Thyroid gland (tissue), 4 donors: ENCODE measurements at regions of chr6 and their contacts with region 1.

Region 1: GRCh38 chr6:134063966-134064445 is 11.6 kb upstream of the SLC2A12 start:
- DNase-seq: peak; percentile 49 to 60
- H3K4me3 ChIP-seq: no peak overlapping the region
- H3K27ac ChIP-seq: no peak overlapping the region
- H3K4me1 ChIP-seq: no peaks in the 10 kb centered on the region
- H3K27me3 ChIP-seq: no peaks in the 10 kb centered on the region
- CTCF ChIP-seq: peak; percentile 35 to 88 (median 70)
- POLR2A ChIP-seq: no peak

Region 2: GRCh38 chr6:133923938-133924593 is 139.9 kb before region 1 on chr6:
- intact Hi-C with region 1: loop called (anchors 10 kb)
- DNase-seq: peak; percentile 68 to 70
- H3K4me3 ChIP-seq: no peak overlapping the region
- H3K27ac ChIP-seq: no peak overlapping the region
- H3K4me1 ChIP-seq: no peaks in the 10 kb centered on the region
- H3K27me3 ChIP-seq: no peaks in the 10 kb centered on the region
- CTCF ChIP-seq: peak; percentile 42 to 93 (median 83)
- POLR2A ChIP-seq: no peak

Region 3: DNA sequence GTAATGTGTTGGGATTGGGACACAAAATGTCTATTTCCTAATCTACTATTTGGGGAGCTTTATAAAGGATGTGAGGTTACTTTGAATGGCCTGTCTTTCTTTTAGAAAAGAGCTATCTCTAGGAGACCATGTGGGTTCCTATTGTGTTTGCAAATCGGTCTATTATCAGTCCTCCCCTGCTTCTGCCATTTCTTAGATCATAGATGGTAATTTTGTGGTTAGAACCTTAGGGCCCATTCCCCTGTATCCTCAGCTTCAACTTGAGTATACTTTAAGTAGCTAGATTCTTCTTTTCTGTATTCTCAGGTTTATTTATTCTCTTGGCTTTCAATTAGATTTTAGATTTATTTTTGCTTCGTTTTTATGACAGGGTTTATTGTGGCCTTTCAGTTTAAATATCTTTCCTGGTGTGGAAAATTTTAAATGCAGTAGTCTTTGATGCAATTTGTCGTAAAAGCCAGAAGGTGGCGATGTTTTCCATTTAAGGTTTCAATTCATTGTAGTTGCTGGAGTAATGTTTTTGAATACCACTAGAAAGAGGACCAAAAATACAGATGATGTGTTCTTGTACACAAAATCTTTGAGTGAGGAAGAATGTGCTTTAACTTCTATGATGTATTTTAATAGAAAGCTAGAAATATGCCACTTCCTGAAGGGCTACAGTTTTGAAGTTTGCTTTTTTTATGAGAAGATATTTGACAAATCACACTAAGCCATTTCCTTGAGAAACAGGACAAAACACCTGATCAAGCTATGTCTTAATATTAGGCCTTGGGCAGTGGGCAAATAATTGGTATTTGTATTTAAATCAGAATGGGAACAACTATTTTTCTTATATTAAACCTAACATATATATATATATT is 90.7 kb before region 1 on chr6:
- intact Hi-C with region 1: loop called (anchors 10 kb)
- DNase-seq: no peak
- H3K4me3 ChIP-seq: no peak overlapping the region
- H3K27ac ChIP-seq: no peak overlapping the region
- H3K4me1 ChIP-seq: peaks cover 6 to 9% of the 10 kb centered on the region in 2 donors
- H3K27me3 ChIP-seq: no peaks in the 10 kb centered on the region
- CTCF ChIP-seq: peak; percentile 33 to 76 (median 55)
- POLR2A ChIP-seq: no peak

Region 4: GRCh38 chr6:134282816-134283215 is 218.8 kb after region 1 on chr6:
- intact Hi-C with region 1: no loop called
- DNase-seq: no peak
- H3K4me3 ChIP-seq: no peak overlapping the region
- H3K27ac ChIP-seq: no peak overlapping the region
- H3K4me1 ChIP-seq: peaks cover 0 to 2% of the 10 kb centered on the region in 2 donors
- H3K27me3 ChIP-seq: no peaks in the 10 kb centered on the region
- CTCF ChIP-seq: no peak
- POLR2A ChIP-seq: no peak